ENCODE measurements at regions of chr19 and their contacts with region 1.

Region 1: GRCh38 chr19:42066075-42066754 is 3.8 kb downstream of the GRIK5 start:
- DNase-seq: peak in 1 of 2 experiments; percentile 62
- ATAC-seq: no peak
- H3K4me3 ChIP-seq: no peak overlapping the region
- H3K27ac ChIP-seq: no peak overlapping the region
- H3K4me1 ChIP-seq: no peaks in the 10 kb centered on the region
- CTCF ChIP-seq: no peak
- EP300 ChIP-seq: no peak
- POLR2A ChIP-seq: no peak
- RAD21 ChIP-seq: no peak

Region 2: DNA sequence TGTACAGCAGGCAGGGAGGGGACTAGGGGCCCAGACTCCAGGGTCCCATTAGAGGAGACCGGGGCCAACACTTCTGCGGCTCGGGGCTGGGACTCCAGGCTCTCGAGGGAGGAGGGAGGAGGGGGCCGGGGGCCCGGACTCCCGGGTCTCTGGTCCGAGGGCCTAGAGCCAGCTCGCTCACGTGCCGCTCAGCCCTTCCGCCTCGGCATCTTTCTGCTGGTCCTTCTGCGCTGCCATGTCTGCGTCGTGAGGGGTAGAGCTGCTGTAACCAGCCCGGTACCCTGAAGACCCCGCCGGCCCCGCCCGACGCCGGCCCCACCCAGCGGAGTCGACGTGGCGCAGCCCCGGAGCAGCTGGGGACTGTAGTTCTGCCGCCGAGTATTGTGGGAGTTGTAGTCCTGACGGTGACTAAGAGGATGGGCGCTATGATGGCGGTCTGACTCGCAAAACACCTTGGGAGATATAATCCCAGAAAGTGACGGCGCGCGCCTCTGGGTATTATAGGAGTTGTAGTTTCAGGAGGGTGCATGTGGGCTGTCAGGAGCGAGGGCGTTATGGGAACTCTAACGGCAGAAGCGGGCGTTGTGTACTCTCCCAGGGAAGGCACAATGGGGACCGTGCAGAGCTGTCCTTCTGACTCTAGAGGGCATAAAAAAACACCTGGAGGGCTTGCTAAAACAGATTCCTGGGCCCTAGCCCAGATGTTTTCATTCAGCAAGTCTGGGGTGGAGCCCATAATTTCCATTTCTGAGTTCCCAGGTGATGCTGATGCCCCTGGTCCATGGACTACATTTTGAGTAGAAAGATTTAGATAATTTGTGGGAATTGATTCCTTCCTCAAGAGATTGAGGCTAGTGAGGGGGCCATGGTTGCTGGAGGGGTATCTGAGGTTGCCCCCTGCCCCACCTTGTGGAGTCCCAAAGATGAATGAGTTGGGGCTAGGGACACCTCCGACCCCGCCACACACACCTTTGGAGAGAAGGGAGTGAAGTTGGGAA is 106.9 kb before region 1 on chr19 and contains the start of gene RABAC1:
- CTCF ChIA-PET with region 1: no interaction called
- POLR2A ChIA-PET with region 1: no interaction called
- DNase-seq: peak; percentile 97 to 100
- ATAC-seq: peak; percentile 78 to 90
- H3K4me3 ChIP-seq: peak within 1 kb of the TSS; percentile 76
- H3K27ac ChIP-seq: peak within 1 kb of the TSS; percentile 80 to 87
- H3K4me1 ChIP-seq: peaks cover 13% of the 10 kb centered on the region
- CTCF ChIP-seq: peak; percentile 54
- EP300 ChIP-seq: no peak
- POLR2A ChIP-seq: peak; percentile 70
- RAD21 ChIP-seq: peak in 1 of 2 experiments; percentile 35; a peak in 1 of 5 replicates
- polyA plus RNA-seq, gene RABAC1: 117 and 137 TPM in 2 replicates

Region 3: DNA sequence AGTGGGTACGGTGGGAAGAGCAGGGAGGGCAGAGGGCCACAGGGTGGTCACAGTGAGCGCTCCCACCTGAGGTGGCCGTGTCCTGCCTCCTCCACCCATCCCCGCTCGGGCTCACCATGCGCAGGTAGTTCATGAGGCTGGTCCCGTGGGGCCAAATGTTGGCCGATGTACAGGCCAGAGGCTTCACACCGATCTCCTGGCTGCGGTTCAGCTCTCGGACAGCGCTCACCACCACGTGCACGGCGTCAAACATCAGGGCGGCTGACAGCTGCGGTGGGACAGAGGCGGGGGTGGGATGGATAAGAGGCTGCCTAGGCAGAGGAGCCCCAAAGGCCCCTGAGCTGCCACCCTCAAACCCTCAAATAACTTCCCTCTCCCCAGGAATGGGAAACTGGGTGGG is 12.0 kb before region 1 on chr19:
- CTCF ChIA-PET with region 1: interaction called, 10 read pairs
- POLR2A ChIA-PET with region 1: no interaction called
- DNase-seq: no peak
- ATAC-seq: no peak
- H3K4me3 ChIP-seq: no peak overlapping the region
- H3K27ac ChIP-seq: no peak overlapping the region
- H3K4me1 ChIP-seq: peaks cover 11% of the 10 kb centered on the region; the same call in 1 of the 3 replicates
- CTCF ChIP-seq: no peak
- EP300 ChIP-seq: no peak
- POLR2A ChIP-seq: no peak
- RAD21 ChIP-seq: no peak

Region 4: DNA sequence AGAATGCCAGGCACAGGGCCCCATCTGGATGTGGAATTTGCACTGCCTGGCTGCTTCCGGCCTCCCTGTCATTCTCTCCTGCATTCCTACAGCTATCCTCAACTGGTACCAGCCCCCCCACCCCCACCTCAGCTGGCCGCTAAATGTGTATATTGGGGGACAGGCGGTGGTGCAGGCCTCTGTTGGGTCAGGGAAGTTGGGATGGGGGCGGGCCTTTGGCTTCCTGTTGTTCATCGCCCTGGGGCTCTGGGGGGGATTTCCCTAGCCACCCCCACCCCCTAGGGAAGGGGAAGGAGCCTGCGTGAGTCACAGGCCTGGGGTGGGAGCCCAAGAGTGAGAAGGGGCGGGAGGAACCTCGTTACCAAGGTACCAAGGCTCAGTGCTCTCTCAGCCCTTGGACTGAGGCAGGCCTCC is 55.4 kb after region 1 on chr19:
- CTCF ChIA-PET with region 1: no interaction called
- POLR2A ChIA-PET with region 1: no interaction called
- DNase-seq: peak in 1 of 2 experiments; percentile 66
- ATAC-seq: peak; percentile 10 to 37; a peak in 3 of 6 replicates
- H3K4me3 ChIP-seq: no peak overlapping the region
- H3K27ac ChIP-seq: peak overlapping the region in 1 of 2 experiments; percentile 56; a peak in 3 of 6 replicates
- H3K4me1 ChIP-seq: peaks cover 14% of the 10 kb centered on the region
- CTCF ChIP-seq: no peak
- EP300 ChIP-seq: no peak
- POLR2A ChIP-seq: no peak
- RAD21 ChIP-seq: no peak

Measured in A549 (cell line).